Activated T-helper 1 cell treated with anti-CD3 and anti-CD28 coated beads, Interleukin-12 subunit alpha, Interleukin-12 subunit beta, Interleukin-2, Interleukin-4 antibody, amounts not matched to agents 30 ng/mL and 10 ng/mL and 1 ng/mL, durations not matched to agents 14 hours and 24 hours and 36 hours (primary cell): ENCODE measurements at regions of chr17 and their contacts with region 1.

Region 1: GRCh38 chr17:74776044-74776977 is at the start of gene NAT9:
- DNase-seq: peak; percentile 99
- H3K4me3 Mint-ChIP-seq: peak within 1 kb of the TSS; percentile 99
- H3K27ac Mint-ChIP-seq: peak within 1 kb of the TSS; percentile 91
- H3K4me1 Mint-ChIP-seq: peaks cover 70% of the 10 kb centered on the region
- H3K27me3 Mint-ChIP-seq: no peaks in the 10 kb centered on the region
- total RNA-seq, gene NAT9: 69.0 and 70.8 TPM in 2 replicates

Region 2: DNA sequence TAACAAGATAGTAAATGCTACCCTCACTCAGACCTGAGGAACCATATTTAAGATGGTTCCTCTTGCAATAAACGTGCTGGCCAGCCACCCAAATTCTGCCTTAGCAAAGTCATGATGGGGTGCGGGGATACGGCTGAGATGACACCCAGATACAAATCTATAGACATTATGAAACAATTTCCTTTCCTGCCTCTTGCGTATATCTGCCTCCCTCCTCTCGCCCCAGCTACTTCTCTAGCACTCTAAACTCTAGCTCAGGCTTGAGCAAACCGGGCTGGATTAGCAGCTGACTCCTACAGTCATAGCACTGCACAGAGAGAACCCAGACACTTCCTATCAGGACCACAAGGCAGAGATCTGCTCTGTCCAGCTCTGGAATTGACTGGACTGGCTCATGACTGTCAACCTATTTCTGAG is 85.9 kb before region 1 on chr17:
- intact Hi-C with region 1: no loop called
- DNase-seq: no peak
- H3K4me3 Mint-ChIP-seq: no peak overlapping the region
- H3K27ac Mint-ChIP-seq: no peak overlapping the region
- H3K4me1 Mint-ChIP-seq: peaks cover 21% of the 10 kb centered on the region
- H3K27me3 Mint-ChIP-seq: peaks cover 17% of the 10 kb centered on the region

Region 3: GRCh38 chr17:74790161-74791054 is 14.1 kb after region 1 on chr17:
- intact Hi-C with region 1: loop called (anchors 1 kb)
- DNase-seq: no peak
- H3K4me3 Mint-ChIP-seq: no peak overlapping the region
- H3K27ac Mint-ChIP-seq: peak overlapping the region; percentile 47
- H3K4me1 Mint-ChIP-seq: peaks cover 39% of the 10 kb centered on the region
- H3K27me3 Mint-ChIP-seq: no peaks in the 10 kb centered on the region